Heart left ventricle (tissue), 16 donors: ENCODE measurements at regions of chr3 and their contacts with region 1.

Region 1: DNA sequence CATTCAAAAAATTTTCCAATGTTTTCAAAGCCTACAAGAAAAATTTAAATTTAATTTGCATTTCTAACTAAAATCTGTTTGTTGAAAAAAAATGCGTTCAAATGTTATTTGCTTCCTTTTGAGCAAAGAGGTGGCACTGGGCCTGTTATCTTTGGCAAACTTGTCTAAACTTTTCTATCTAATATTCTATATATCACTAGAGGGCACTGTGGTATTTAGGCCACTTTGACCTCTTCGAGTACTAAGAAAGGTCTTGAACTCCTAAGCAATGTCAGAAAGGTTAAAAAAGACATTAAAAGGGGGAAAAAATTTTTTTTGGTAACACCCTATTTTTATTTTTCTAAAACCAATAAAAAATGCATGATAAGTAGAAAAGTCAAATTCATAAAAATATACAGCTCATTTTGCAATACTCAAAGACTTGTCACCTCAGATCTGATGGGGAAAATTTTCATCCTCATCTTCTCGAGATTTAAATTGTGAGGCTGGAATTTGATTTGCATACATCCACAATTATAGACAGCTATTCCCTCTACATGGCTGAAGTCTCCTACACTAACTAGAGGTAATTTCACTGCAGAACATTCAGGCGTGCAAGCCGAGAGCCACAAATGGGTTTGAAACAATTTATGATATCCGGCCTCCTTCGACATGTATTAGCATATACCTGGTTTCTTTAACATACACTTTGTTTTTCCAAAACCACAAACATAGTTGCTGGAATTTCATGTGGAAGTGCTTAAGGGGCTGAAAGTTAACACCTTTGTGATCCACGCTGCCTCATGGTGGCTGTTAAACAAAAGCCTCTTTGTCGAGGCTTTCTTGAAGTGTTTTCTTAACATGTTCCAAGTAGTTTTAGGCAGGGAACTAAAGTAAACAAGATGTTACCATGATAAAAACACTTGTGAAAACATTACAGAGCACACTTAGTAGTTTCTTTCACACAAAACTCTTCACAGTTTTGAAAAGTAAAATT is 576.4 kb downstream of the FOXP1 start:
- DNase-seq: no peak
- ATAC-seq: peak in 3 of 4 donors; percentile 22 to 69 (median 65)
- H3K4me3 ChIP-seq: no peak overlapping the region
- H3K27ac ChIP-seq: peak overlapping the region in 10 of 12 donors; percentile 4 to 55 (median 32)
- H3K4me1 ChIP-seq: peaks cover 0 to 78% (median 39%) of the 10 kb centered on the region in 12 donors
- H3K27me3 ChIP-seq: no peaks in the 10 kb centered on the region
- CTCF ChIP-seq: peak in 11 of 12 donors; percentile 38 to 72 (median 55)
- POLR2A ChIP-seq: no peak

Region 2: DNA sequence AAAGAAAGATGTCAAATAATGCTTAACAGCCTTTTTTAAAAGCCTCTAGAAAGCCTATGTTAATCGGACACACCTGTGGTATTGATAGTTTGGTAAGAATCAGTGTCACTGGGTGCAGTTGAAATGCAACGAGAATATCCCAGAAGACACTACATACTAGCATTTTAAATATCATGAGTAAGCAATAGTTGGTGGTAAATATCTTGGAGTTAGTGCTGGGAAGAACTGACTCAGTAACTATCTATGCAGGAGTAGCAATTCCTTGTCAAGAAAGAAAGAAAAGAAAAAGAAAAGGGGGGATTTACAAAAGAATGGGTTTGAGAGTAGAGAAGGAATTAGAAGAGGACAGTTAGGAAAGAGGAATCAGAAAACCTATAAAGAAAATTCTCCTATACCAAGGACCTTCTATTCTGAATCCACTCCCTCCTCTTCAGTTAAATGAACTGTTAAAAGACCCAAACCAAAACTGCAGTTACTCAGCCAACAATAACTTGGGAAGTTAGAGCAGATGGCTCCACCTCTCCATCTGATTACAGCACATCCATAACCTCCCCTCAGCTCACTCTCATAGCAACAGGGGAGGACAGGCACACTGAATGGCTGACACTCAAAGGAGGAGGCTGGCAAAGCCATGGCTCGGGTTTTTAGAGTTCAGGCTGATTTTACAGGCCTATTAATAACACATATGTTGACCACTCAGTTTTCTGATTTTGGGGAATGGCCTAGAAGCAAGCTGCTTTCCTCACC is 487.0 kb before region 1 on chr3:
- intact Hi-C with region 1: no loop called
- DNase-seq: no peak
- ATAC-seq: no peak
- H3K4me3 ChIP-seq: no peak overlapping the region
- H3K27ac ChIP-seq: no peak overlapping the region
- H3K4me1 ChIP-seq: peaks cover 0 to 5% (median 0%) of the 10 kb centered on the region in 12 donors
- H3K27me3 ChIP-seq: peaks cover 0 to 5% (median 0%) of the 10 kb centered on the region in 9 donors
- CTCF ChIP-seq: no peak
- POLR2A ChIP-seq: no peak

Region 3: GRCh38 chr3:70766301-70766700 is 240.8 kb before region 1 on chr3:
- intact Hi-C with region 1: no loop called
- DNase-seq: no peak
- ATAC-seq: no peak
- H3K4me3 ChIP-seq: no peak overlapping the region
- H3K27ac ChIP-seq: no peak overlapping the region
- H3K4me1 ChIP-seq: no peaks in the 10 kb centered on the region
- H3K27me3 ChIP-seq: no peaks in the 10 kb centered on the region
- CTCF ChIP-seq: no peak
- POLR2A ChIP-seq: no peak

Region 4: GRCh38 chr3:71050538-71051258 is 43.6 kb after region 1 on chr3:
- intact Hi-C with region 1: loop called in 2 of 10 experiments (anchors 5 kb)
- DNase-seq: no peak
- ATAC-seq: no peak
- H3K4me3 ChIP-seq: no peak overlapping the region
- H3K27ac ChIP-seq: peak overlapping the region in 11 of 12 donors; percentile 47 to 86 (median 74)
- H3K4me1 ChIP-seq: peaks cover 10 to 98% (median 86%) of the 10 kb centered on the region in 12 donors
- H3K27me3 ChIP-seq: no peaks in the 10 kb centered on the region
- CTCF ChIP-seq: no peak
- POLR2A ChIP-seq: no peak

Region 5: GRCh38 chr3:71057526-71057894 is 50.4 kb after region 1 on chr3:
- intact Hi-C with region 1: loop called in 2 of 10 experiments (anchors 5 to 10 kb)
- DNase-seq: no peak
- ATAC-seq: no peak
- H3K4me3 ChIP-seq: peak overlapping the region in 6 of 12 donors; percentile 2 to 26 (median 16)
- H3K27ac ChIP-seq: peak overlapping the region; percentile 22 to 97 (median 82)
- H3K4me1 ChIP-seq: peaks cover 0 to 100% (median 82%) of the 10 kb centered on the region in 12 donors
- H3K27me3 ChIP-seq: no peaks in the 10 kb centered on the region
- CTCF ChIP-seq: no peak
- POLR2A ChIP-seq: no peak

Region 6: GRCh38 chr3:71064288-71064955 is 57.3 kb after region 1 on chr3:
- intact Hi-C with region 1: loop called in 9 of 10 experiments (anchors 2 to 10 kb)
- DNase-seq: peak in 3 of 5 donors; percentile 36 to 47 (median 39)
- ATAC-seq: peak; percentile 20 to 60 (median 52)
- H3K4me3 ChIP-seq: peak overlapping the region; percentile 28 to 87 (median 75)
- H3K27ac ChIP-seq: peak overlapping the region; percentile 91 to 99 (median 97)
- H3K4me1 ChIP-seq: peaks cover 5 to 74% (median 51%) of the 10 kb centered on the region in 12 donors
- H3K27me3 ChIP-seq: no peaks in the 10 kb centered on the region
- CTCF ChIP-seq: peak in 2 of 12 donors; percentile 1 to 17
- POLR2A ChIP-seq: no peak